ENCODE measurements at regions of chr11 and their contacts with region 1.

Region 1: GRCh38 chr11:70816156-70816678 is 417.9 kb downstream of the CTTN start:
- DNase-seq: no peak
- ATAC-seq: no peak
- H3K4me3 Mint-ChIP-seq: no peak overlapping the region
- H3K27ac Mint-ChIP-seq: no peak overlapping the region
- H3K4me1 Mint-ChIP-seq: no peaks in the 10 kb centered on the region
- H3K27me3 Mint-ChIP-seq: no peaks in the 10 kb centered on the region; the same call in 1 of the 2 replicates
- CTCF ChIP-seq: no peak

Region 2: GRCh38 chr11:70796648-70797227 is 19.5 kb before region 1 on chr11:
- CTCF ChIA-PET with region 1: interaction called, 17 read pairs
- POLR2A ChIA-PET with region 1: no interaction called
- DNase-seq: peak; percentile 46
- ATAC-seq: peak; percentile 73
- H3K4me3 Mint-ChIP-seq: no peak overlapping the region
- H3K27ac Mint-ChIP-seq: no peak overlapping the region
- H3K4me1 Mint-ChIP-seq: peaks cover 6% of the 10 kb centered on the region
- H3K27me3 Mint-ChIP-seq: no peaks in the 10 kb centered on the region
- CTCF ChIP-seq: 0 out of 2 replicates have a peak, but pooled peaks have one; percentile 20

Region 3: DNA sequence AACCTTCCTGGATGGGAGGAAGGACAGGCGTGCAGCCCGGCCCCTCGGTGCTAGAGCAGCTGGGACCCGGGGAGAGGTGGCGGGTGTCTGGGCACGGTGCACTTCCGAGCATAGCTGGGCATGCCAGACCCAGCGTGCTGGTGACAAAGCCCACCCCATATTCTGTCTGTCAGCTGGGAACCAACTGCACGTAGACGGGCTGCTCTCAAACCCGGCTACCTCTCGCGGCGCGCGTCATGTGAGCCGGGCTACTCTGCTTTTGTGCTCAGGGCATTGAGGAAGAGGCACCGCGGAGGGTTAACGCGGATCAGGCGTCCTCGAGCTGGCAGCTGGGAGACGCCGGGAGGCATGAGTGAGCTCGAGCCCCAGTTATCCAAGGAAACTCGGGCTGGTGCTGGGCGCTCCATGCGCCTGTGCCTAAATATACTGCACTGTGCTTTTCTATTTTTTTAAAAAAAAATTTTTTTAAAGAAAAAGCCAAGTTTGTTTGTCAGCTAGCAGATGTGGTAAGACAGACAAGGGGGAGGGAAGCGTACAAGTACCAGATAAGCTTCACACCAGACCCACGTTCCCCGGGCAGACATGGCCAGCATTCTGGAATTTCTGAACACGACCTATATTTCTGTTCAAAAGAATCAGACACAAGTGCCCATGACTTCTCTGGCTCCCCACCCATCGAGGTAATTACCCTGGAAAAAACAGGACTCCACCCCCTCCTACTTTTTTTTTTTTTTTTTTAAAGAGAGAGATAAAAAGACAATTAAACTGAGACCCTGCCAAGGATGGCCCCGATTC is 10.5 kb after region 1 on chr11:
- CTCF ChIA-PET with region 1: interaction called, 36 read pairs
- POLR2A ChIA-PET with region 1: interaction called, 3 read pairs
- DNase-seq: peak; percentile 59
- ATAC-seq: peak; percentile 73
- H3K4me3 Mint-ChIP-seq: no peak overlapping the region
- H3K27ac Mint-ChIP-seq: 0 out of 2 replicates have a peak overlapping the region, but pooled peaks have one; percentile 40
- H3K4me1 Mint-ChIP-seq: peaks cover 35% of the 10 kb centered on the region
- H3K27me3 Mint-ChIP-seq: no peaks in the 10 kb centered on the region
- CTCF ChIP-seq: no peak

Region 4: DNA sequence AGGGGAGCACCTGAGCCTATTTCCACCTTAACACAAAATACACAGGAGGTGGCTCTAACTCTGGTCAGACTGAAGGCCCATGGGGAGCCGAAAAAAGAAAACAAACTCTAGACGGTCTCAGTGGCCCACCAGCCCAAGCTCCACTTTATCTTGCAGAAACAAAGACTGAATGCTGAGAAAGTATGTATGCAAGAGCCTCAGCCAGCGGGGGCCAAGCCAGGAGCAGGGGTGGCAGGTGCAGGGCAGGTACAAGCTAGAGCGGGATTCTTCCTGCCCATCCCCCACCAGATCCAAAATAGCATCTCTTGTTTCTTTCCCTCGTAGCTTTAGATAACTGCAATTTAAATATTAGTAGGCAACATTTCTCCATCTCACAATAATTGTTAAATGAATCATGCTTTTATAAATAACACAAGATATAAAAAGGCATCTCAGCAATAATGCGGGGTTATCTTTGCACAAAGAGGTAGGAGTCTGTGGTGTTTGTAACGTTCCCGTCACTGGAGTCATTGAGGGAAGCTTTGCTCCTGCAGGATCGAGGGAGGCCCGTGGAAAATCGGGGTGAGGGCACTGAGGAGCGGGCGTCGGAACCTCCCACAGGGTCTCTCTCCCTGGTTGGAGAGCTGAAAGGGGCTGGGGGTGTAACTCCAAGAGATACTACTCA is 18.2 kb after region 1 on chr11:
- CTCF ChIA-PET with region 1: interaction called, 28 read pairs
- POLR2A ChIA-PET with region 1: no interaction called
- DNase-seq: peak; percentile 75
- ATAC-seq: peak; percentile 83
- H3K4me3 Mint-ChIP-seq: peak overlapping the region; percentile 1; the same call in 1 of the 2 replicates
- H3K27ac Mint-ChIP-seq: peak overlapping the region; percentile 51
- H3K4me1 Mint-ChIP-seq: peaks cover 27% of the 10 kb centered on the region
- H3K27me3 Mint-ChIP-seq: no peaks in the 10 kb centered on the region
- CTCF ChIP-seq: no peak

Region 5: GRCh38 chr11:70913715-70914231 is 97.6 kb after region 1 on chr11:
- CTCF ChIA-PET with region 1: interaction called, 12 read pairs
- POLR2A ChIA-PET with region 1: no interaction called
- DNase-seq: peak; percentile 50
- ATAC-seq: peak; percentile 84
- H3K4me3 Mint-ChIP-seq: peak overlapping the region; percentile 52
- H3K27ac Mint-ChIP-seq: peak overlapping the region; percentile 70; the same call in 1 of the 2 replicates
- H3K4me1 Mint-ChIP-seq: peaks cover 30% of the 10 kb centered on the region
- H3K27me3 Mint-ChIP-seq: no peaks in the 10 kb centered on the region
- CTCF ChIP-seq: no peak